Mammary epithelial cell (primary cell): ENCODE measurements at regions of chr2 and their contacts with region 1.

Region 1: DNA sequence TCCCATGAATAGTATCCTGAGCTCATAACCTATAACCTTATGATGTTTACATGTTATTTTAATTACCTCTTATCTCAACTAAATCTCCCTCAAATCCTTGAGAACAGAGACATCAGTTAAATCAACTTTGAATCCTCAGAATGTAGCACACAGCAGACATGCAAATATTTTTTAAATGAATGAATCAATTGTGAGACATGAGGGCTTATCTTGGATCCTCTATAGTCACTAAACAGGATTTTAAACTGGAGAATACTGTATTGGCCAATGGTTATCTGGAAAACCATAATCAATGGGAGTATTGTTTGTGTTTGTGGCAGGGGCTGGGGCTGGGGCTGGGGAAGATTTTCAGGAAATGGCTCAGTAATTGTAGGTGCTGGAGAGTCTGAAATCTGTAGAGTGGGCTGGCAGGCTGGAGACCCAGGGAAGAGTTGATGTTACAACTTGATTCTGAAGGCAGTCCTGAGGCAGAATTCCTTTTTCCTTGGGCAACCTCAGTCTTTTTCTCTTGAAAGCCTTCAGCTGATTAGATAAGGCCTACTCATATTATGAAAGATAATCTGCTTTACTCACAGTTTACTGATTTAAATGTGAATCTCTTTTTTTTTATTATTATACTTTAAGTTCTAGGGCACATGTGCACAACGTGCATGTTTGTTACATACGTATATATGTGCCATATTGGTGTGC is 106.3 kb downstream of the NCOA1 start:
- DNase-seq: no peak
- H3K4me3 ChIP-seq: no peak overlapping the region
- H3K27ac ChIP-seq: no peak overlapping the region
- H3K4me1 ChIP-seq: no peaks in the 10 kb centered on the region
- H3K27me3 ChIP-seq: no peaks in the 10 kb centered on the region
- CTCF ChIP-seq: no peak

Region 2: DNA sequence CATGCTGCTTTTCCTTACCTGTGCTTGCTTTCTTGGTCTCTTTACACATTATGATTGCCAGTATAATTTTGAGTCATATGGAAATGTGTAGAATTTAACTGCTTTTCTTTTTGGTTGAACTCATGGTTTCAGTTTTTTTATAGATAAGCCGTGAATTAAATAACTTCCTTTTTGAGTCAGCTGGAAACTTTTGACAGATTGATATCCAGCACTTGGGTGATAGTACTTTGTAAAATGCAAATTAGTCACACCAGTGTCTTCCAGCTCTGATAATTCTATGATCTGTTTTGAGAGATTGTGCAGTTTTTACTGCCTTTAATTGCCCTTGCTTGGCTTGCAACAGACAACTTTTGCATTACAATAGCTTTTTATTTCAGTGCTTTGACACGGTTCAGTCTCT is 19.8 kb before region 1 on chr2:
- CTCF ChIA-PET with region 1: no interaction called
- dilution Hi-C with region 1: no loop called
- in situ Hi-C with region 1: no loop called
- intact Hi-C with region 1: no loop called
- DNase-seq: no peak
- H3K4me3 ChIP-seq: no peak overlapping the region
- H3K27ac ChIP-seq: no peak overlapping the region
- H3K4me1 ChIP-seq: no peaks in the 10 kb centered on the region
- H3K27me3 ChIP-seq: no peaks in the 10 kb centered on the region
- CTCF ChIP-seq: no peak

Region 3: GRCh38 chr2:24659862-24660261 is 62.5 kb after region 1 on chr2:
- CTCF ChIA-PET with region 1: no interaction called
- dilution Hi-C with region 1: loop called (anchors 10 kb)
- in situ Hi-C with region 1: no loop called
- intact Hi-C with region 1: no loop called
- DNase-seq: no peak
- H3K4me3 ChIP-seq: no peak overlapping the region
- H3K27ac ChIP-seq: no peak overlapping the region
- H3K4me1 ChIP-seq: no peaks in the 10 kb centered on the region
- H3K27me3 ChIP-seq: no peaks in the 10 kb centered on the region
- CTCF ChIP-seq: no peak